ENCODE measurements at regions of chr13 and their contacts with region 1.

Region 1: GRCh38 chr13:35789335-35790165 is 313.1 kb upstream of the MAB21L1 start:
- DNase-seq: no peak
- H3K4me3 ChIP-seq: no peak overlapping the region
- H3K27ac ChIP-seq: no peak overlapping the region
- H3K27me3 ChIP-seq: no peaks in the 10 kb centered on the region
- CTCF ChIP-seq: peak; percentile 69

Region 2: DNA sequence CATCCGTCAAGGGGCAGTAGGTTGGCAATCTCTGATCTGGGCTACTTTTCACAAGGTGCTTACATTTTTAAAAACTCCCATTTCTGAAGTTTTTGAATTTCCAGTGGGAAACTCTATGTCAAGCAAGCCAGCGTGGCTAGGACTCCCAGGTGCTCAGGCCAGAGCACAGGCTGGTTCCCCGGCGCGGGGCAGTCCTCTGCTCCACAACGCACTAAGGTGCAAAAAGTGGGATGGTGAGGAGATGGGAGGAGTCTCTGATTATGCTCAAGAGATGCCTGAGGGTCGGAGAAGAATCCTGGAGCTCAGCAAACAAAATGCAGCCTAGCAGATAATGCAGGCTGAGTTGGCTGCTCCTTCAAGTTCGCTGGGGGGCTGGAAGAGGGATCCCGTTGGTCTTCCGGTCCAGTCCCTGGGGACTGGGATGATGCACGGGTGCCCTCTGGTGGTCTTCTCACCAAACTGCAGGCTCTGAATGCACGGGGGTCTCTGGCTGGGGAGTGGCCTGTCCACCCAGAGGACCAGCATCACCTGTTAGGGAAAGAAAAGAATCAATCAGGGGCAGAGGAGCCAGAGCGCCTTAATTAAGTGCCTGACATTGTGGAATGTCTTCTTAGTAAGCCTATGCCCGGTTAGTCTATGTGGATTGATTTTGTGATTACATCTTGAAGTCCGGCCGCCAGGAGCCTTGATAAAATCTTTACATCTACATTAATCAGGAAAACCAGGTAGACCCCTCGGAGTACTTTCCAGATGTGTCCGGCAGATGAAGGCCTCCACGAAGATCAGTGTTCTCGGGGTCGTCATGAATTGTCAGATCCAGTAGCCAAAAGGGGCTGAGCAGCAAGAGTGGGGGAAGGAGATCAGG is 68.6 kb before region 1 on chr13:
- CTCF ChIA-PET with region 1: interaction called, 59 read pairs
- POLR2A ChIA-PET with region 1: interaction called, 3 read pairs
- DNase-seq: no peak
- H3K4me3 ChIP-seq: peak overlapping the region; percentile 47
- H3K27ac ChIP-seq: no peak overlapping the region
- H3K27me3 ChIP-seq: peaks cover 2% of the 10 kb centered on the region
- CTCF ChIP-seq: peak; percentile 100

Region 3: DNA sequence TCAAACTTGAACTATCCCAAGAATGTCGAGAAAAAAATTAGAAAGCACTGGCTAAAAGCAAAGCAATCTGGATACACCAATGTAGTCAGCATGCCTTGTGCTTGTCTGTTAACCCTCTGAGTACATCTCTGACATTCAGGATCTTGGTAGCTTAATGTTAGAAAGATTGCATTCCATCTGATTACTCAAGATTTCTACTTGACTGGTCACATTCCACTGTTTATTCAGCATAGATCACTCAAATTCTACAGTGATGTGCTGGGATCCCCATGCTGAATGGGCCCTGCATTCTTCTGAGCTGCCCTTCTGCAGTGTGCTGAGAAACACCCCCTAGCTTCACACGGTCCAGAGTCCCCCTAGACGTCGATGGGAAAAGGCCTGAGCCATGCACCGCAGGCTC is 17.7 kb before region 1 on chr13:
- CTCF ChIA-PET with region 1: interaction called, 19 read pairs
- POLR2A ChIA-PET with region 1: no interaction called
- DNase-seq: peak; percentile 79
- H3K4me3 ChIP-seq: no peak overlapping the region
- H3K27ac ChIP-seq: peak overlapping the region; percentile 66
- H3K27me3 ChIP-seq: no peaks in the 10 kb centered on the region
- CTCF ChIP-seq: no peak

Region 4: GRCh38 chr13:35804901-35805300 is 15.4 kb after region 1 on chr13:
- CTCF ChIA-PET with region 1: interaction called, 15 read pairs
- POLR2A ChIA-PET with region 1: no interaction called
- DNase-seq: no peak
- H3K4me3 ChIP-seq: no peak overlapping the region
- H3K27ac ChIP-seq: no peak overlapping the region
- H3K27me3 ChIP-seq: peaks cover 2% of the 10 kb centered on the region
- CTCF ChIP-seq: no peak

Region 5: GRCh38 chr13:35953537-35954206 is 164.1 kb after region 1 on chr13:
- CTCF ChIA-PET with region 1: interaction called, 15 read pairs
- POLR2A ChIA-PET with region 1: no interaction called
- DNase-seq: peak; percentile 79
- H3K4me3 ChIP-seq: peak overlapping the region; percentile 21
- H3K27ac ChIP-seq: no peak overlapping the region
- H3K27me3 ChIP-seq: peaks cover 1% of the 10 kb centered on the region
- CTCF ChIP-seq: peak; percentile 73

Region 6: GRCh38 chr13:35994131-35994966 is 204.8 kb after region 1 on chr13:
- CTCF ChIA-PET with region 1: no interaction called
- POLR2A ChIA-PET with region 1: no interaction called
- DNase-seq: no peak
- H3K4me3 ChIP-seq: no peak overlapping the region
- H3K27ac ChIP-seq: no peak overlapping the region
- H3K27me3 ChIP-seq: no peaks in the 10 kb centered on the region
- CTCF ChIP-seq: no peak

Region 7: GRCh38 chr13:36346222-36347083 is 556.9 kb after region 1 on chr13 and contains the start of gene SPART:
- CTCF ChIA-PET with region 1: no interaction called
- POLR2A ChIA-PET with region 1: no interaction called
- DNase-seq: peak; percentile 78
- H3K4me3 ChIP-seq: peak within 1 kb of the TSS; percentile 83
- H3K27ac ChIP-seq: peak within 1 kb of the TSS; percentile 100
- H3K27me3 ChIP-seq: no peaks in the 10 kb centered on the region
- CTCF ChIP-seq: peak; percentile 98
- polyA plus RNA-seq, gene SPART: 69.7 and 94.6 TPM in 2 replicates